ENCODE measurements at regions of chr3 and their contacts with region 1.

Region 1: DNA sequence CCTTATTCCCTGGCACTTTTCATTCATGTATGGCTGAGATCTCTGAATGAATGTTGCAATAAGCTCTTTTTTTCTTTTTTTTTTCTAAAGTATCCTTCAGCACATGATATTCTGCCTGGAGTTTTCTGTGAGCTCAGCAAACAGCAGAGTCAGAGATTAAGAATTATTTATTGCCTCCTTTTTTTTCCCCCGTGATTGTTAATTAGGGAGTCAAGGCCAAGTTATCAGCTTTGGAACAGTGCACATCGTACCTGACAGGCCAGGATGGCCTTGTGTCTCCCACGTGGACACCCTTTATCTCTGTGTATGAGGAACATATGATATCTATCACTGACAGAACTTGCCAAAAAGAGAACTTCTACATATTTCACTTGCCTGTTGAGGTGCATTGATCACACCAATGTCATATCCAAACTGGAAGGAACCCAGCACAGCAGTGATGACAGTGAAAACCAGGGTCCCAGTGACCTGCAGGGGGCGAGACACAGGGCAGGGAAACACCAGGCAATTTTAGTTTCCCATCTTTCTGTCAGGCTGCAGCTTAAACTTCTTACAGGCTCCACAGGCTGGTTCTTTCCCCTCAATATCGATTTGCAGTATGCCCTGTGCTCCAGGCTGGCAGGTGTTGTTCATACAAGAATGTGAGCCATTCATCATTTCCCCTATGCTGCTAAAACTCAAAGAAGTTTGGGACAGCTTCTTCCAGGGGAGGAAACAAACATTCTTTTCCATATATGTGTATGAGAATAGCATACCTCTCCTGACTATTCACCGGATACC is 8.2 kb downstream of the SLC2A2 start:
- DNase-seq: peak; percentile 58
- H3K4me3 Mint-ChIP-seq: no peak overlapping the region
- H3K27ac Mint-ChIP-seq: no peak overlapping the region
- H3K4me1 Mint-ChIP-seq: peaks cover 29% of the 10 kb centered on the region
- H3K27me3 Mint-ChIP-seq: no peaks in the 10 kb centered on the region
- CTCF ChIP-seq: peak; percentile 54

Region 2: GRCh38 chr3:170977911-170978310 is 40.4 kb before region 1 on chr3:
- CTCF ChIA-PET with region 1: interaction called, 3 read pairs
- intact Hi-C with region 1: loop called (anchors 5 kb)
- DNase-seq: no peak
- H3K4me3 Mint-ChIP-seq: peak overlapping the region; percentile 51
- H3K27ac Mint-ChIP-seq: no peak overlapping the region
- H3K4me1 Mint-ChIP-seq: peaks cover 28% of the 10 kb centered on the region
- H3K27me3 Mint-ChIP-seq: no peaks in the 10 kb centered on the region
- CTCF ChIP-seq: no peak

Region 3: DNA sequence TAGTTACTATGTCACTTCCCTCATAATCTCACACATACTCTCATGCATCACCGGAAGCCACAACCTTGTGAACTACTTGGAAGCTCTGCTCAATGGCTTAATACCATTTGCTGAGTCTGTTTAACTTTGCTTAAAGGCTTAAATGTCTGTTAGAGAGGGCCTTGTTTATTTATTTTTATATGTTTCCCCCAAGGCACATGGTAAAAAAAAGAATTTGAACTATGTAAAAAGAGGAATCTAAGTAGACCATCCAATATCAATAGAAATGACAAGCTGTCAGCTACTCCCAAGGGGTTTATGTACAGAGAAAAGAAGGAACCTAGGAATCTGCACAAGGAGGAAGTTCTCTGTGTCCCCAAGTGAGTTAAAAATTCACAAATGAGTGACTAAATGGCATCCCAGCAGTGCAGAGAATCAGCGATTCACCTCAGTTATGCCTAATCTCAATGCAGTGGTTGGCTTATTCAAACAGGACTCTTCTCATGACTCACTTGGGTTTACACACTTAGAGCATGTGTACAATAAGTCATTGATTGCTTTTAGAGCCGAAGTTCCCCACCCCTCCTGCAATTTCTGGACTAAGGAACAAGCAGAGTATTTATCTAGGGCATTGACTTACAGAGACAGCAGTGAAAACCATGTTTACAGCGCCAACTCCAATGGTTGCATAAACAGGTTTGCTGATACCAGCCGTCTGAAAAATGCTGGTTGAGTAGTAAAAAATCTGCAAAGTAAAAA is 16.2 kb before region 1 on chr3:
- CTCF ChIA-PET with region 1: interaction called, 6 read pairs
- intact Hi-C with region 1: loop called (anchors 2 kb)
- DNase-seq: peak; percentile 81
- H3K4me3 Mint-ChIP-seq: peak overlapping the region; percentile 26
- H3K27ac Mint-ChIP-seq: peak overlapping the region; percentile 85
- H3K4me1 Mint-ChIP-seq: peaks cover 86% of the 10 kb centered on the region
- H3K27me3 Mint-ChIP-seq: no peaks in the 10 kb centered on the region
- CTCF ChIP-seq: no peak

Region 4: GRCh38 chr3:171142985-171143384 is 124.6 kb after region 1 on chr3:
- CTCF ChIA-PET with region 1: no interaction called
- intact Hi-C with region 1: no loop called
- DNase-seq: no peak
- H3K4me3 Mint-ChIP-seq: no peak overlapping the region
- H3K27ac Mint-ChIP-seq: no peak overlapping the region
- H3K4me1 Mint-ChIP-seq: no peaks in the 10 kb centered on the region
- H3K27me3 Mint-ChIP-seq: no peaks in the 10 kb centered on the region
- CTCF ChIP-seq: no peak